ENCODE measurements at regions of chr12 and their contacts with region 1.

Region 1: DNA sequence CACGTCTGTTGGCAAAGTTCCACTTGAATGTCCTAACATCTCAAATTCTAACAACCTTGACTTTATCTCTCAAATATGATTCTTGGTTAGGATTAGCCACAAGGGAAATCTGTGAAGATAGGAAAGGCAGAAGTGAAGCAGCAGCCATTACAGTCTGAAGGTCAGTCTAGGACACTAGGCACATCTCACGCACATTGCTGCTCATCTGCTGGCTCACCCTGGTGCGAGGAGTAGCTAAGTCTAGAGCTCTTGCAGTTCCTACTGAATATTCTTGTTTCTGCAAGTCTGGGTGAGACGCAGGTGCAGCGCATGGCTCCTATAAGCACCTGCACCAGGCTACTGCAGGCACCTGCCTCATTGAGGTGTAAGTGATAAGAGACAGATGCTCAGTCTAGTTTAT is 6.4 kb upstream of the SLC25A3 start:
- DNase-seq: no peak
- H3K4me3 ChIP-seq: no peak overlapping the region
- H3K27ac ChIP-seq: no peak overlapping the region
- H3K4me1 ChIP-seq: no peaks in the 10 kb centered on the region
- H3K27me3 ChIP-seq: no peaks in the 10 kb centered on the region
- CTCF ChIP-seq: no peak

Region 2: DNA sequence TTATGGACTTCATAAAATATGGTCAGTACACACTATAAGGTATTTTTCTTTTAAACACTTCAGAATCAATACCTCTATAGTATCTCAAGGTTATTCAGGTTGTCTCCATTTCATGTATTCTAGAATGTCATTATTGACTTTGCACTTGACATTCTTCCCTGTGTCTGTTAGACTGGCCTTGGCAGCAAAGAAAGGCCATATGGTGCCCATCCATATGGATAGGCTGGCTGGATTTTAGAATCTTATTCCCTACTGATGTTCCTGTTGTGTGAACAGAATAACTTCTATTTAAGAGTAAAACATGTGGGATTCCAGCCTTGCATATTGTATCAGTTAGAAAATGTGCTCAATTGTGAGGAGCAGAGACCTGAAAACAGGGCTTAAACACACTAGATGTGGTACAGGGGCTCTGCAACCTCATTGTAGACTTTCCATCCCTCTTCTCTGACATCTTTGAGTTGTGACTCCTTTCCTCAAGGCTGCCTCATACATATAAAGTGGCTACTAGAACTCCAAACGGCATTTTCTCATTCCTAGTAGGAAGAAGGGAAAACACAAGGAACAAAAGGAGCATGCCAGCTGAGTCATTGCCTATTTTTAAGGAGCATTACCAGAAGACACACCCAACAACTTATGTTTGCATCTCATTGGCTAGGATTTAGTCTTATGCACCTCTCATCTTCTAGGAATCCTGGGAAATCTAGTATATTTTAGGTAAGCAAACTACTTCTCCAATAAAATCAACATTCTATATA is 292.9 kb before region 1 on chr12:
- intact Hi-C with region 1: no loop called
- DNase-seq: no peak
- H3K4me3 ChIP-seq: no peak overlapping the region
- H3K27ac ChIP-seq: no peak overlapping the region
- H3K4me1 ChIP-seq: no peaks in the 10 kb centered on the region
- H3K27me3 ChIP-seq: no peaks in the 10 kb centered on the region
- CTCF ChIP-seq: no peak

Region 3: DNA sequence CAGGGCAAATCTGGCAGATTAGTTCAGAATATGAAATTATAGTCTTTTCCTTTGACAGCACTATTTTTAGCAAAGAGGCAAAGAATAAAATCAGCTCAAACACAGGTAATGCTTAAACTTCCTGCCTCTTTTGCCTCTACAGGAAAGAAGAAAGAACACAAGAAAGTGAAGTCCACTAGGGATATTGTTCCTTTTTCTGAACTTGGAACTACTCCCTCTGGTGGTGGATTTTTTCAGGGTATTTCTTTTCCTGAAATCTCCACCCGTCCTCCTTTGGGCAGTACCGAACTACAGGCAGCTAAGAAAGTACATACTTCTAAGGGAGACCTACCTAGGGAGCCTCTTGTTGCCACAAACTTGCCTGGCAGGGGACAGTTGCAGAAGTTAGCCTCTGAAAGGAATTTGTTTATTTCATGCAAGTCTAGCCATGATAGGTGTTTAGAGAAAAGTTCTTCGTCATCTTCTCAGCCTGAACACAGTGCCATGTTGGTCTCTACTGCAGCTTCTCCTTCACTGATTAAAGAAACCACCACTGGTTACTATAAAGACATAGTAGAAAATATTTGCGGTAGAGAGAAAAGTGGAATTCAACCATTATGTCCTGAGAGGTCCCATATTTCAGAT is 54.3 kb before region 1 on chr12:
- intact Hi-C with region 1: no loop called
- DNase-seq: no peak
- H3K4me3 ChIP-seq: no peak overlapping the region
- H3K27ac ChIP-seq: no peak overlapping the region
- H3K4me1 ChIP-seq: no peaks in the 10 kb centered on the region
- H3K27me3 ChIP-seq: no peaks in the 10 kb centered on the region
- CTCF ChIP-seq: peak; percentile 35 to 37

Region 4: DNA sequence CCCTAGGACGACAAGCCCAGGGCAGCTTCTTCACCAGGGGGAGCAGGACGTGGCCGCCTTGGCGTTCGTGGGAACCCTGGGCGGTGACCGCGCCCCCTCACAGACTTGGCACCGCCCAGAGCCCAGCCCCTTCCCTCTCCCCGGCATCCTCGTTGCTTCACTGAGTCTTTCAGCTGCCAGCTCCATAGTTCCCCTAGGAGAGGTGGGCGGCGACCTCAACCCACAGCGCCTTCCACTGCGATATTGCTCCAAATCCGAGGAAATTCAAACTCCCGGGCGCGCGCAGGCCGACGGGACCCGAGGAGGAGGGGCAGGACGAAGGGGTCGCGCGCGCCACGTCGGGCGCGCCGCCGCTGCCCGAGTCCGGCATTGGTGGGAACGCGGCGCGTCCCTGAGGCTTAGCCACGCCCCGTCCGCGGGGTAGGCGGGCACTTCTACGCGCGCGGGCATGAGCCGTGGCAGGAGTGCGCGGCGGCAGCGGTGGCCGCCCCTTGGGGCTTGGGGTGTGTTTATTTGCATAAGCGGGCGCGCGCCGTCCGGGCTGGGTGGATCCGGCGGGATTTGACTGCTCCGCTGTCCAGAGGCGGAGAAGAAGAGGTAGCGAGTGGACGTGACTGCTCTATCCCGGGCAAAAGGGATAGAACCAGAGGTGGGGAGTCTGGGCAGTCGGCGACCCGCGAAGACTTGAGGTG is 57.8 kb after region 1 on chr12 and contains the starts of genes APAF1 and IKBIP:
- intact Hi-C with region 1: loop called (anchors 5 kb)
- DNase-seq: peak; percentile 98
- H3K4me3 ChIP-seq: peak within 1 kb of the TSS; percentile 97 to 99
- H3K27ac ChIP-seq: peak within 1 kb of the TSS; percentile 90 to 96
- H3K4me1 ChIP-seq: peaks cover 0 to 26% (median 9%) of the 10 kb centered on the region in 4 donors
- H3K27me3 ChIP-seq: no peaks in the 10 kb centered on the region
- CTCF ChIP-seq: no peak

Region 5: GRCh38 chr12:99059824-99060511 is 472.9 kb after region 1 on chr12:
- intact Hi-C with region 1: no loop called
- DNase-seq: peak; percentile 39 to 67
- H3K4me3 ChIP-seq: no peak overlapping the region
- H3K27ac ChIP-seq: peak overlapping the region in 1 of 2 donors; percentile 28
- H3K4me1 ChIP-seq: peaks cover 0 to 5% (median 1%) of the 10 kb centered on the region in 4 donors
- H3K27me3 ChIP-seq: no peaks in the 10 kb centered on the region
- CTCF ChIP-seq: no peak